Activated CD4-positive, alpha-beta T cell treated with anti-CD3 and anti-CD28 coated beads for 36 hours (primary cell): ENCODE measurements at regions of chr1 and their contacts with region 1.

Region 1: DNA sequence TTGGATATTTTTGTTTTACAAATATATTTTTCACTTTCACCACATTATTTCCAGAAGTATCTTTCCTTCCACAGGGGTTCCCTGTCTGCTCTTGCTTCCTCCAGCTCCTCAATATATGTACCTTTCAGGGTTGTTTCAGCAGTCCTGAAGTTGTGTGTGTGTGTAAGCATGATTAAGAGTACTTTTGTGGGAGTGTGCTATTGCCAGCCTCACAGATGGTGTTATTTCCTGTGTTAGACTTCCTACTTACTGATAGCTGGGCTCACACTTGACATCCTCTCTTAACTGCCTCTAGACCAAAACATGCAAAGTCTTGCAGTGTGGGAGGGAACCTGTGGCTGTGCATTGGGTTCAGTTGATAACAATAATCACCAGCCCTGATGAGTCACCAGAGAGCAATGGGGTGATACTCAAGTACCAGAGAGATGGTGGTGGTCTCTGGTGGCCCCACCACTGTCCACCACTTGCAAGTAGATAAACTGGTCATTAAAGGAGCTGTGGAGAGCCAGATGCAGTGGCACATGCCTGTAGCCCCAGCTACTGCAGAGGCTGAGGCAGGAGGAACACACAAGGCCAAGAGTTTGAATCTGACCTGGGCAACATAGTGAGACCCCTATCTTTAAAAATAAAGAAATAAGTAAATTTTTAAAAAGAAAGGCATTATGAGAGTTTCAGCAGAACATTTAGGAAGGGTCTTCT is 126.7 kb downstream of the NR5A2 start:
- DNase-seq: peak; percentile 63
- ATAC-seq: peak; percentile 82
- H3K4me3 Mint-ChIP-seq: peak overlapping the region; percentile 7
- H3K27ac Mint-ChIP-seq: peak overlapping the region; percentile 84
- H3K4me1 Mint-ChIP-seq: peaks cover 42% of the 10 kb centered on the region
- H3K27me3 Mint-ChIP-seq: no peaks in the 10 kb centered on the region

Region 2: DNA sequence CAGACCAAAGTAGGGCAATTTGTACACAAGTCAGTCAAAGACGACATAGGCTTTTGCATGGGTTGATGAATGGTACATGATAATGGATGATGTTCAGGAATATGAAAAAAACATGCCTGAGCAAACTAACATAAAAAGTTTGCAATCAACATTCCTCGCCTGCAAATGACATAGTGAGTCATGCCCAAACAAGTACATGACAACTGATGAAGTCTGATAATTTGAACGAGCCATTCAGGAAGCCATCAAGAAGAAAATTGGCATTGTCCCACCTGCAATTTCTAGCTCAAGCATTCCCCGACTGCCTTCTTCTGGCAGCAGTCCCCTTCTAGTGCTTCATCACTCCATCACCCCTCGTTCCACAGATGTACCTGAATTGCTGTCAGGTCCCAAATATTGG is 245.1 kb before region 1 on chr1:
- CTCF ChIA-PET with region 1: no interaction called
- POLR2A ChIA-PET with region 1: no interaction called
- intact Hi-C with region 1: no loop called
- DNase-seq: no peak
- ATAC-seq: no peak
- H3K4me3 Mint-ChIP-seq: no peak overlapping the region
- H3K27ac Mint-ChIP-seq: no peak overlapping the region
- H3K4me1 Mint-ChIP-seq: no peaks in the 10 kb centered on the region
- H3K27me3 Mint-ChIP-seq: peaks cover 6% of the 10 kb centered on the region

Region 3: GRCh38 chr1:200172311-200172710 is 18.1 kb after region 1 on chr1:
- CTCF ChIA-PET with region 1: no interaction called
- POLR2A ChIA-PET with region 1: no interaction called
- intact Hi-C with region 1: no loop called
- DNase-seq: no peak
- ATAC-seq: no peak
- H3K4me3 Mint-ChIP-seq: no peak overlapping the region
- H3K27ac Mint-ChIP-seq: no peak overlapping the region
- H3K4me1 Mint-ChIP-seq: no peaks in the 10 kb centered on the region
- H3K27me3 Mint-ChIP-seq: peaks cover 5% of the 10 kb centered on the region

Region 4: GRCh38 chr1:200253774-200254495 is 99.7 kb after region 1 on chr1:
- CTCF ChIA-PET with region 1: no interaction called
- POLR2A ChIA-PET with region 1: no interaction called
- intact Hi-C with region 1: loop called (anchors 1 to 5 kb)
- DNase-seq: peak; percentile 49
- ATAC-seq: peak; percentile 67
- H3K4me3 Mint-ChIP-seq: no peak overlapping the region
- H3K27ac Mint-ChIP-seq: no peak overlapping the region
- H3K4me1 Mint-ChIP-seq: peaks cover 9% of the 10 kb centered on the region
- H3K27me3 Mint-ChIP-seq: peaks cover 7% of the 10 kb centered on the region

Region 5: GRCh38 chr1:200351826-200352549 is 197.8 kb after region 1 on chr1:
- CTCF ChIA-PET with region 1: no interaction called
- POLR2A ChIA-PET with region 1: no interaction called
- intact Hi-C with region 1: loop called in 1 of 2 experiments (anchors 5 kb)
- DNase-seq: peak; percentile 23
- ATAC-seq: peak; percentile 68
- H3K4me3 Mint-ChIP-seq: peak overlapping the region; percentile 30
- H3K27ac Mint-ChIP-seq: peak overlapping the region; percentile 82
- H3K4me1 Mint-ChIP-seq: peaks cover 35% of the 10 kb centered on the region
- H3K27me3 Mint-ChIP-seq: no peaks in the 10 kb centered on the region

Region 6: GRCh38 chr1:200448034-200448762 is 294.0 kb after region 1 on chr1:
- CTCF ChIA-PET with region 1: no interaction called
- POLR2A ChIA-PET with region 1: no interaction called
- intact Hi-C with region 1: loop called in 1 of 2 experiments (anchors 1 kb)
- DNase-seq: peak; percentile 15
- ATAC-seq: peak; percentile 75
- H3K4me3 Mint-ChIP-seq: no peak overlapping the region
- H3K27ac Mint-ChIP-seq: peak overlapping the region; percentile 92
- H3K4me1 Mint-ChIP-seq: peaks cover 44% of the 10 kb centered on the region
- H3K27me3 Mint-ChIP-seq: peaks cover 7% of the 10 kb centered on the region